B cell (primary cell): ENCODE measurements at regions of chr6 and their contacts with region 1.

Region 1: GRCh38 chr6:170516783-170517616 is 36.1 kb downstream of the PSMB1 start:
- DNase-seq: peak; percentile 65
- ATAC-seq: peak; percentile 82
- H3K4me3 ChIP-seq: no peak overlapping the region
- H3K4me3 Mint-ChIP-seq: peak overlapping the region; percentile 42
- H3K27ac ChIP-seq: no peak overlapping the region
- H3K27ac Mint-ChIP-seq: no peak overlapping the region
- H3K4me1 ChIP-seq: peaks cover 3% of the 10 kb centered on the region in 2 donors
- H3K4me1 Mint-ChIP-seq: peaks cover 4% of the 10 kb centered on the region
- H3K27me3 ChIP-seq: peaks cover 0 to 12% (median 1%) of the 10 kb centered on the region in 4 experiments
- H3K27me3 Mint-ChIP-seq: peaks cover 44% of the 10 kb centered on the region
- CTCF ChIP-seq: peak; percentile 85

Region 2: GRCh38 chr6:168895102-168895812 is 1621.7 kb before region 1 on chr6:
- CTCF ChIA-PET with region 1: interaction called, 7 read pairs
- POLR2A ChIA-PET with region 1: no interaction called
- intact Hi-C with region 1: loop called (anchors 1 kb)
- DNase-seq: peak; percentile 69
- ATAC-seq: peak; percentile 90
- H3K4me3 ChIP-seq: peak overlapping the region in 3 of 5 experiments; percentile 27 to 56 (median 34)
- H3K4me3 Mint-ChIP-seq: peak overlapping the region; percentile 35
- H3K27ac ChIP-seq: no peak overlapping the region
- H3K27ac Mint-ChIP-seq: no peak overlapping the region
- H3K4me1 ChIP-seq: peaks cover 0 to 4% of the 10 kb centered on the region in 2 donors
- H3K4me1 Mint-ChIP-seq: peaks cover 6% of the 10 kb centered on the region
- H3K27me3 ChIP-seq: peaks cover 0 to 2% (median 0%) of the 10 kb centered on the region in 4 experiments
- H3K27me3 Mint-ChIP-seq: peaks cover 8% of the 10 kb centered on the region
- CTCF ChIP-seq: peak; percentile 91

Region 3: DNA sequence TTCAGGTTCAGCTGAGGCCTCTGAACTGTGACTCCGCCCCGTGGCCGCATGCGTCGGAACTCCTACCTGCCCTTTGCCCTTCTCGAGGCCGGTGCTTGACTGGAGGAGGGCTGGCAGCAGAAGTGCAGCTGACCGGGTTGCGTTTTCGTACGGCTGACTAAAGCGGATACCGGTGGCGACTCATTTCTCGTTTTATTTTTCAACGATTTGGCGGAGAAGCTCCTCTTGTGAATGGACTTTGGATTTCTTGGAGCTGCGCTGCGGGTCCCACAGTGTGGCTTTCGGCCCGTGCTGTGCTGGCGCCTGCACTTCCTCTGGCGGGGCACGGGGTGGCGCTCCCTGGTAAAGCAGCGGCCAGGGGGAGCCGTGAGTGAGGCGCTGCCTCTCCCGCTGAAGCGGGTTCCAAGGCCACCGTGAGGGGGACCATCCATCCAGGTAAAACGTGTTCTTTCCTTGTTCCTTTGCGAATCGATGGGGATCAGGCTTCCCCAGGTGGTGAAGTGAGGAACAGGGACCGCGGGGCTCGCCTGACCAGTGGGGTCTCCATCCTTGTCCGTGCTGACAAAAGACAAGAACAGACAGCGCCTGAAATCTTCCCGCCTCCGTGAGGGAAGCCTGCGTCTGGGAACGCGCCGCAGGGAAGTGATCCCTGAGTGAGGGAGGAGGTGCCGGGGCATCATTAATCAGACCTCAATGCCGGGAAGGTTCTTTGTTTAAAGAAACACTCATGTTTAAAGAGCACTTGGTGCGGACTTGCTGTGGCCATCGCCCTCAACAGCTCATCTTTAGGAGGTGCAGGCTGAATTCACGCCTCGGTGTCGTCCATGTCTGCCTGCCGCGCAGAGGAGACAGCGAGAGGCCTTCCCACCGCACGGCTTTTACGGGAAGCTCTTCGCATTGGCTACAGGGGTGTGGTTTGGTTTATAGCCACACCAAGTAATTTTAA is 726.7 kb before region 1 on chr6:
- CTCF ChIA-PET with region 1: interaction called, 59 read pairs
- POLR2A ChIA-PET with region 1: no interaction called
- intact Hi-C with region 1: loop called (anchors 1 kb)
- DNase-seq: peak; percentile 81
- ATAC-seq: peak; percentile 93
- H3K4me3 ChIP-seq: peak overlapping the region; percentile 32 to 73 (median 51)
- H3K4me3 Mint-ChIP-seq: peak overlapping the region; percentile 92
- H3K27ac ChIP-seq: no peak overlapping the region
- H3K27ac Mint-ChIP-seq: no peak overlapping the region
- H3K4me1 ChIP-seq: peaks cover 9 to 16% of the 10 kb centered on the region in 2 donors
- H3K4me1 Mint-ChIP-seq: peaks cover 14% of the 10 kb centered on the region
- H3K27me3 ChIP-seq: peaks cover 0 to 39% (median 8%) of the 10 kb centered on the region in 4 experiments
- H3K27me3 Mint-ChIP-seq: peaks cover 41% of the 10 kb centered on the region
- CTCF ChIP-seq: peak; percentile 99

Region 4: DNA sequence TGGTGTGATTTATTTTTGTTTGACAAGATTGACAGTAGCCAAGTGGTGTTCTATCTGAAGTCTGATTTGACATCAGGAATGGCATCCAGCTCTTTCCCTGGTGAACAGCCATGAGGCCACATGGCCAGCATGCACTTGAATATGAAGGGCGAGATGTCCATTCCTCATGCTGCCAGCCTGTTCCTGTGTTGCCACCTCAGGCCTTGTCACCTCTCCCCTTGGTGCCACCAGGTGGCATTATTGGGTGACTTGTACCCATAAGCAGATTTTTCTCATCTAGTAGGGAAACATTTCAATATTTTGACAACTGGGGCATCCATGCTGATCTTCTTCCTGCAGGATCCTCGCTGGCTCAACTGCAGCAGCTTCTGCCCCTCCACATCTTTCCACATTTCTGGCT is 566.4 kb before region 1 on chr6:
- CTCF ChIA-PET with region 1: interaction called, 14 read pairs
- POLR2A ChIA-PET with region 1: no interaction called
- intact Hi-C with region 1: loop called (anchors 1 kb)
- DNase-seq: peak; percentile 40
- ATAC-seq: no peak
- H3K4me3 ChIP-seq: no peak overlapping the region
- H3K4me3 Mint-ChIP-seq: no peak overlapping the region
- H3K27ac ChIP-seq: no peak overlapping the region
- H3K27ac Mint-ChIP-seq: no peak overlapping the region
- H3K4me1 ChIP-seq: no peaks in the 10 kb centered on the region
- H3K4me1 Mint-ChIP-seq: peaks cover 6% of the 10 kb centered on the region
- H3K27me3 ChIP-seq: no peaks in the 10 kb centered on the region
- H3K27me3 Mint-ChIP-seq: peaks cover under 1% of the 10 kb centered on the region
- CTCF ChIP-seq: peak; percentile 36

Region 5: GRCh38 chr6:170529839-170530469 is 13.0 kb after region 1 on chr6:
- CTCF ChIA-PET with region 1: interaction called, 22 read pairs
- POLR2A ChIA-PET with region 1: no interaction called
- intact Hi-C with region 1: no loop called
- DNase-seq: peak; percentile 67
- ATAC-seq: peak; percentile 49
- H3K4me3 ChIP-seq: no peak overlapping the region
- H3K4me3 Mint-ChIP-seq: no peak overlapping the region
- H3K27ac ChIP-seq: no peak overlapping the region
- H3K27ac Mint-ChIP-seq: no peak overlapping the region
- H3K4me1 ChIP-seq: no peaks in the 10 kb centered on the region
- H3K4me1 Mint-ChIP-seq: no peaks in the 10 kb centered on the region
- H3K27me3 ChIP-seq: no peaks in the 10 kb centered on the region
- H3K27me3 Mint-ChIP-seq: no peaks in the 10 kb centered on the region
- CTCF ChIP-seq: peak; percentile 83